GM13977 (cell line): ENCODE measurements at regions of chr1 and their contacts with region 1.

Region 1: GRCh38 chr1:89762779-89763648 is 57.8 kb upstream of the LRRC8D start:
- DNase-seq: peak; percentile 82
- CTCF ChIP-seq: peak; percentile 100

Region 2: DNA sequence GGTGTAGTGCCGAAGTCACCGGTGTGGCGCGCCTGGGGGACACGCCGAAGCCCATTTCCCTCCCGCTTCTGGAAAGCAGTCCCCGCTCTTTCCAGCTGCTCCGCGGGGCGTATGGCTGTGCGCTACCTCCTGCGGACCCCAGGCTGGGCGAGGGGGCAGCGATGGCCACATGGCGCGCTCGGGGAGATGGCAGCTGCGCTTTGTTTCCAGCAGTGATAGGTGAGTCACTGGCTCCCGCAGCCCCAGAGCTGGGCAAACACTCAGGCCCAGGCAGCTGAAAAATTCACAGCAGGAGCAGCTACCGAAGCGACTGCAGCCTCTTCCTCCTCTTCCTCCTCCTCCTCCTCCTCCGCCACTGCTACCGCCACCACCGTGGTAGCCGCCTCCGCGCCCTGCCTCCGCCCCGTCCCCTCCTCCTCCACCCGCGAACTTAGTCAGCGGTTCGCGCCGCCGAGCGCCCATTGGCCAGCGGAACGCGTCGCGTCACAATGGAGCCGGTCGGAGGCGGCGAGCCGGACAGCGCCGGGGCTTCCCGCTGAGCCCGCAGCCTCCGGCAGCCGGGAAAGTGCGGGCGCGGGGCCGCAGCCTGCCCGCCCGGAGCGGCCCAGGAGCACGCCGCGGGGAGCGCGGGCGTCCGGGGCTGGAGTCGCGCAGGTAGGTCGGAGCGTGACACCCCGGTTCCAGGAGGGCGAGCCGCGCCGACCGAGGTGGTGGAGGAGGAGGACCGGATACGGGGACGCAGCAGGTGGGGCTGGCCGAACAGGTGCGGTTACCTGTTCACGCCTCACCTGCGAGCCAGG is 238.4 kb before region 1 on chr1 and contains the start of gene LRRC8B:
- in situ Hi-C with region 1: loop called (anchors 25 kb)
- DNase-seq: peak; percentile 90
- CTCF ChIP-seq: no peak

Region 3: GRCh38 chr1:89632657-89633247 is 130.3 kb before region 1 on chr1 and contains the start of gene LRRC8C:
- in situ Hi-C with region 1: loop called (anchors 25 kb)
- DNase-seq: peak; percentile 89
- CTCF ChIP-seq: peak; percentile 88

Region 4: GRCh38 chr1:89962024-89962741 is 199.2 kb after region 1 on chr1:
- in situ Hi-C with region 1: no loop called
- DNase-seq: no peak
- CTCF ChIP-seq: no peak

Region 5: GRCh38 chr1:89994805-89995597 is 232.0 kb after region 1 on chr1 and contains the start of gene ZNF326:
- in situ Hi-C with region 1: no loop called
- DNase-seq: peak; percentile 99
- CTCF ChIP-seq: no peak